Dendritic cell treated with granulocyte-macrophage colony-stimulating factor and Interleukin-4, amounts not matched to agents 40 ng/mL and 50 ng/mL, for 4 days (primary cell): ENCODE measurements at regions of chr19 and their contacts with region 1.

Region 1: DNA sequence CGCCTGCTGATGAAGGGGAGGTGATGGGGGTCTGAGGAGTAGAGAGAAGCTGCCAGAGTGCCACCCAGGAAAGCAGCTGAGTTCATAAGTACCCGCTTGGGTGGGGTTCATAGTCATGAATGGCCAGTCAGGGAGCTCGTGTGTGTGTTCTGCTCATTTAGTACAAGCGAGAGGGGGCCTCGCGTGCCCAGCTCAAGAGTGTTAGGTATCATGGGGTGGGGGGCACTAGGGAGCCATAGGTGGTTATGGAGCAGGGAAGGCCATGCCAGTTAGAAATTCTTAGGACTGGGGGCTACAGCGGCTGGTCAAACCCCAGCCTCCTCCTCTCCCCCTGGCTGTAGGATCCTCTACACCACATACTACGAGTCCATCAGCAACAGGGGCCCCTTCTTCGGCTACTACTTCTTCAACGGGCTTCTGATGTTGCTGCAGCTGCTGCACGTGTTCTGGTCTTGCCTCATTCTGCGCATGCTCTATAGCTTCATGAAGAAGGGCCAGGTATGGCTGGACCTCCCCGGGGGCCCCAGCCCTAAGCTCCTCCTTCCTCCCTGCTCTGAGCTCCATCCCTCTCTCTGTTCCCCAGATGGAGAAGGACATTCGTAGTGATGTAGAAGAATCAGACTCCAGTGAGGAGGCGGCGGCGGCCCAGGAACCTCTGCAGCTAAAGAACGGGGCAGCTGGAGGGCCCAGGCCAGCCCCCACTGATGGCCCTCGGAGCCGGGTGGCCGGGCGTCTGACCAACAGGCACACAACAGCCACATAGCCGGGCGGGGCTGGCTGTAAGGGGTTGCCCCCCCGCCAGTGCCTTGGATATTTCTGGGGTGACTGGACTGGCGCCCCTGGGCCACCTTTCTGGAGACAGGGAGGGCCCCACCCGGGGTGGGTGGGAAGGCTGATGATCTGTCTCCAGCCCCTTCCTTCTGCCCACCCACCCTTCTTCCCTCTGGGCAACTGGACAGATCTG is 46.5 kb downstream of the CD320 start:
- H3K4me3 Mint-ChIP-seq: no peak overlapping the region
- H3K27ac Mint-ChIP-seq: no peak overlapping the region
- H3K4me1 Mint-ChIP-seq: peaks cover 22% of the 10 kb centered on the region
- H3K27me3 Mint-ChIP-seq: peaks cover 54% of the 10 kb centered on the region

Region 2: GRCh38 chr19:8224394-8225145 is 37.1 kb before region 1 on chr19:
- intact Hi-C with region 1: no loop called
- H3K4me3 Mint-ChIP-seq: no peak overlapping the region
- H3K27ac Mint-ChIP-seq: no peak overlapping the region
- H3K4me1 Mint-ChIP-seq: peaks cover 8% of the 10 kb centered on the region
- H3K27me3 Mint-ChIP-seq: peaks cover 40% of the 10 kb centered on the region

Region 3: GRCh38 chr19:8321060-8321985 is 59.7 kb after region 1 on chr19 and contains the starts of genes NDUFA7 and RPS28:
- intact Hi-C with region 1: loop called (anchors 10 kb)
- H3K4me3 Mint-ChIP-seq: peak within 1 kb of the TSS; percentile 90
- H3K27ac Mint-ChIP-seq: peak within 1 kb of the TSS; percentile 93
- H3K4me1 Mint-ChIP-seq: peaks cover 47% of the 10 kb centered on the region
- H3K27me3 Mint-ChIP-seq: peaks cover 6% of the 10 kb centered on the region

Region 4: DNA sequence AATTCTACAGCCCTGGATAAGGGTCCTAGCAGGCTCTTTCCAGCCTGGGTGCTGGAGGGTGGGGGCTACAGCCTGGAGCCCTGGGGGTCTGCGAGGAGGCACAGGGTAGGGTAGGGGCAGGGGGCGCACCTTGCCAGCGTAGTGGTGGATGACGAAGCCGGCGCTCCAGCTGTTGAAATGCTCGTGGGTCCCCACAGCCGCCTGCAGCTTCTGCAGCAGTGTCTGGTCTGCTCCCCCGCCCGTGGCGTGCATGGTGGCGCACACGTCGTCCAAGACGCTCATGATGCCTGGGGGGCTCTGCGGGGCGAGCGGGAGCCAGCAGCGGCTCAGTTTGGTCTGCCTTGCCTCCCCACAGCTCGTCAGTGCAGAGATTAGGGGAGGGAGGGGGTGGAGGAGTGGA is 282.5 kb after region 1 on chr19:
- intact Hi-C with region 1: no loop called
- H3K4me3 Mint-ChIP-seq: no peak overlapping the region
- H3K27ac Mint-ChIP-seq: no peak overlapping the region
- H3K4me1 Mint-ChIP-seq: peaks cover 39% of the 10 kb centered on the region
- H3K27me3 Mint-ChIP-seq: no peaks in the 10 kb centered on the region